IMR-90 (cell line): ENCODE measurements at regions of chr22 and their contacts with region 1.

Region 1: GRCh38 chr22:40346178-40347118 is at the start of gene ADSL:
- DNase-seq: peak; percentile 79
- ATAC-seq: peak; percentile 97
- H3K4me3 ChIP-seq: peak within 1 kb of the TSS; percentile 88
- H3K27ac ChIP-seq: peak within 1 kb of the TSS; percentile 95
- H3K4me1 ChIP-seq: no peaks in the 10 kb centered on the region
- H3K27me3 ChIP-seq: no peaks in the 10 kb centered on the region
- CTCF ChIP-seq: 0 out of 2 replicates have a peak, but pooled peaks have one; percentile 19
- POLR2A ChIP-seq: peak; percentile 83
- RAD21 ChIP-seq: no peak
- total RNA-seq, gene ADSL: 181 and 229 TPM in 2 replicates

Region 2: GRCh38 chr22:39985383-39986035 is 360.9 kb before region 1 on chr22:
- CTCF ChIA-PET with region 1: no interaction called
- POLR2A ChIA-PET with region 1: no interaction called
- dilution Hi-C with region 1: no loop called
- in situ Hi-C with region 1: no loop called
- intact Hi-C with region 1: no loop called
- DNase-seq: no peak
- ATAC-seq: no peak
- H3K4me3 ChIP-seq: no peak overlapping the region
- H3K27ac ChIP-seq: no peak overlapping the region
- H3K4me1 ChIP-seq: no peaks in the 10 kb centered on the region
- H3K27me3 ChIP-seq: peaks cover 57% of the 10 kb centered on the region
- CTCF ChIP-seq: no peak
- POLR2A ChIP-seq: no peak
- RAD21 ChIP-seq: no peak

Region 3: GRCh38 chr22:40036591-40037225 is 309.7 kb before region 1 on chr22:
- CTCF ChIA-PET with region 1: interaction called, 4 read pairs
- POLR2A ChIA-PET with region 1: no interaction called
- dilution Hi-C with region 1: no loop called
- in situ Hi-C with region 1: loop called (anchors 10 kb)
- intact Hi-C with region 1: loop called (anchors 2 kb)
- DNase-seq: peak; percentile 76
- ATAC-seq: peak; percentile 96
- H3K4me3 ChIP-seq: no peak overlapping the region
- H3K27ac ChIP-seq: no peak overlapping the region
- H3K4me1 ChIP-seq: no peaks in the 10 kb centered on the region
- H3K27me3 ChIP-seq: peaks cover 59% of the 10 kb centered on the region
- CTCF ChIP-seq: peak; percentile 86
- POLR2A ChIP-seq: no peak
- RAD21 ChIP-seq: peak; percentile 92

Region 4: GRCh38 chr22:40177738-40178416 is 168.6 kb before region 1 on chr22 and contains the start of gene TNRC6B:
- CTCF ChIA-PET with region 1: interaction called, 5 read pairs
- POLR2A ChIA-PET with region 1: interaction called, 3 read pairs
- dilution Hi-C with region 1: no loop called
- in situ Hi-C with region 1: loop called (anchors 5 kb)
- intact Hi-C with region 1: loop called (anchors 1 kb)
- DNase-seq: peak; percentile 98
- ATAC-seq: peak; percentile 83
- H3K4me3 ChIP-seq: peak within 1 kb of the TSS; percentile 60
- H3K27ac ChIP-seq: peak within 1 kb of the TSS; percentile 53
- H3K4me1 ChIP-seq: peaks cover 5% of the 10 kb centered on the region
- H3K27me3 ChIP-seq: no peaks in the 10 kb centered on the region
- CTCF ChIP-seq: no peak
- POLR2A ChIP-seq: peak; percentile 98
- RAD21 ChIP-seq: peak; percentile 23
- total RNA-seq, gene TNRC6B: 14.7 and 17.0 TPM in 2 replicates

Region 5: GRCh38 chr22:40276996-40277823 is 69.2 kb before region 1 on chr22:
- CTCF ChIA-PET with region 1: no interaction called
- POLR2A ChIA-PET with region 1: no interaction called
- dilution Hi-C with region 1: no loop called
- in situ Hi-C with region 1: no loop called
- intact Hi-C with region 1: loop called (anchors 2 kb)
- DNase-seq: peak; percentile 51
- ATAC-seq: peak; percentile 56
- H3K4me3 ChIP-seq: peak overlapping the region; percentile 75
- H3K27ac ChIP-seq: peak overlapping the region; percentile 73
- H3K4me1 ChIP-seq: peaks cover 2% of the 10 kb centered on the region; the same call in 1 of the 2 replicates
- H3K27me3 ChIP-seq: no peaks in the 10 kb centered on the region
- CTCF ChIP-seq: no peak
- POLR2A ChIP-seq: no peak
- RAD21 ChIP-seq: no peak